Calu3 (cell line): ENCODE measurements at regions of chr3 and their contacts with region 1.

Region 1: DNA sequence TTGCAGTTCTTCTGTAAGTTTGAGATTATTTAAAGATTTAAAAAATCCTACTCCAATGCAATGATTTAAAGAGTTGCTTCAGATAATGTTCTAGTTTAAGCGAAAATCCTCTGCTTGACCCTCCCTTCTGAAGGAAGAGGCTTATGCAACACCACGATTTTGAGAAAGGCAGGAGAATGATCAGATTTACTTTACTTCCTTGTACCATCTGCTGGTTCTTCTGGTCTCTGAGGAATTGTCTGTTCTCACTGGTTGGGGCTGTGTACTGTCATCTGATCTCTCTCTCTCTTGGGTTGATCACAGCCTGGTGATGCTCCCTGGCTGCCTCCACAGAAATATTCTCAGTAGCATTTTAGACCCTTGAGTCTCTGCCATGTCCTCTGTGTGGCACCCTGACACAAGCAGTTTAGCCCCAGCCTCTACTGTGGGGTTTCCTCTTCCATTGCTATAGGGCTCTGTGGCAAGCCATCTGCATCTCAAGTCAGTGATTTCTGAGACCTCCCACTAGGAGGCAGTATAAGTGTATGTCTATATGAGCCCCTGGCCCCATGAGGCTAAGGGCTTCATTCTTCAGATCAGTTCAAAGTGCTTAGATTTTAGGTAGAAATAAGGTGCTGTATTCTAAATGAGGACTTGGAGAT is 50.8 kb upstream of the PLAAT1 start:
- DNase-seq: peak; percentile 76
- H3K4me3 Mint-ChIP-seq: no peak overlapping the region
- H3K27ac Mint-ChIP-seq: no peak overlapping the region
- H3K4me1 Mint-ChIP-seq: no peaks in the 10 kb centered on the region
- H3K27me3 Mint-ChIP-seq: no peaks in the 10 kb centered on the region
- CTCF ChIP-seq: peak; percentile 79

Region 2: DNA sequence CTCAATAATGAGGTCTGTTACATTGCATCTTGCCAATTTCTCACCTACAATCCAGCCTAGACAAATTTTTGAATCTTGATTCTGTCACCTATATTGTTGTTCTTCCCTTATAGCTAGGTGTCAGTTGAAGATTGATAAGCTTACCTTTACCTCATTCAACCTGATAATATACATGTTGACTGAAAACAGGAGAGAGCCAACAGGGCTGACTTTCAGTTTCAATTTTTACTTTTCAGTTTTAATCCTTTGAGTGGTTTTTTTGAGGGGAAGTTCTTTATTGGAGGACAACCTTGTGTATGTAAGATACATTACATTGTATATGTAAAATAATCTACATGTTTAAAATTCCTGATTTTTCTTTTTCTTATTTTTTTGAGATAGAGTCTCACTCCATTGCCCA is 182.5 kb after region 1 on chr3:
- CTCF ChIA-PET with region 1: no interaction called
- intact Hi-C with region 1: loop called (anchors 10 kb)
- DNase-seq: no peak
- H3K4me3 Mint-ChIP-seq: no peak overlapping the region
- H3K27ac Mint-ChIP-seq: no peak overlapping the region
- H3K4me1 Mint-ChIP-seq: no peaks in the 10 kb centered on the region
- H3K27me3 Mint-ChIP-seq: no peaks in the 10 kb centered on the region
- CTCF ChIP-seq: no peak

Region 3: DNA sequence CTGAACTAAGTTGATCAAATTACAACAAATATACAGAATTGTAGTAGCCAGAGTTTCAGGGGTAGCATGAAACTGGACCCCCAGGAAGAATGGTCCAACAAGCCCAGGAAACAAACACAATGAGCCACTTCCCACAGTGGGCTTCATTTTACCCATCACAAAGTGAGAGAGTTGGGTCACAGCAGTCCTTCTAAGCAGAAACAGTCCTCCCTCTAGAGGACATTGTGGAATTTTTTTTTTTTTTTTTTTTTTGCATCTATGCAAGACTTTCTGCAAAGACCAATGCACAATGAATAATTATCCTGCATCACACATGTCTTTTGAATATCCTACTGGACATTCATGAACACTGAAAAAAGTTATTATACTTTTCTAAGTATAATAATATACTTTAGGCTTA is 262.1 kb after region 1 on chr3:
- CTCF ChIA-PET with region 1: no interaction called
- intact Hi-C with region 1: loop called (anchors 1 kb)
- DNase-seq: no peak
- H3K4me3 Mint-ChIP-seq: no peak overlapping the region
- H3K27ac Mint-ChIP-seq: no peak overlapping the region
- H3K4me1 Mint-ChIP-seq: no peaks in the 10 kb centered on the region
- H3K27me3 Mint-ChIP-seq: no peaks in the 10 kb centered on the region
- CTCF ChIP-seq: peak; percentile 44

Region 4: GRCh38 chr3:193465992-193466608 is 275.8 kb after region 1 on chr3:
- CTCF ChIA-PET with region 1: no interaction called
- intact Hi-C with region 1: loop called (anchors 2 kb)
- DNase-seq: no peak
- H3K4me3 Mint-ChIP-seq: no peak overlapping the region
- H3K27ac Mint-ChIP-seq: no peak overlapping the region
- H3K4me1 Mint-ChIP-seq: peaks cover 9% of the 10 kb centered on the region
- H3K27me3 Mint-ChIP-seq: no peaks in the 10 kb centered on the region
- CTCF ChIP-seq: no peak

Region 5: GRCh38 chr3:193564012-193564411 is 373.7 kb after region 1 on chr3:
- CTCF ChIA-PET with region 1: no interaction called
- intact Hi-C with region 1: loop called (anchors 2 kb)
- DNase-seq: peak; percentile 84
- H3K4me3 Mint-ChIP-seq: no peak overlapping the region
- H3K27ac Mint-ChIP-seq: no peak overlapping the region
- H3K4me1 Mint-ChIP-seq: peaks cover 6% of the 10 kb centered on the region
- H3K27me3 Mint-ChIP-seq: no peaks in the 10 kb centered on the region
- CTCF ChIP-seq: peak; percentile 57

Region 6: DNA sequence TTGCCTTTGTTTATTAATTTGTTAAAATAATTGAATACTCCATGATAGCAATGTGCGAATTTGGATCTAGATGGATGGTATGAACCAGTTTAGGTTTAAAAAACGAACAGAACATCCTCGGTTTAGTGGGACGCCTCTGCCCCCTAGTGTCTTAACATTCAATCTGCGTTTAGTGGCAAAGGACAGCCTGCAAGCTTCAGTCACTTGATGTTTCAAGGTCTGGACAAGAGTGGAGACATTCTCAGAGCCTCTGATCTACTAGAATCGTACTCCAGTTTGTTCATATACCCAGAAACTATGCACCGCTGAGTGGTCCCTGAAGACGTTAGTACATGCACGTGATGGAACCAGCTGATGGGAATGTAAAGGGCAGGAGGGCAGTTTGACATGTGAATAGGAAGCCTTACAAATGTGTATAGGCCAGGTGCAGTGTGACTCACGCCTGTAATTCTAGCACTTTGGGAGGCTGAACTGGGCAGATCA is 382.2 kb after region 1 on chr3:
- CTCF ChIA-PET with region 1: interaction called, 3 read pairs
- intact Hi-C with region 1: loop called (anchors 1 kb)
- DNase-seq: peak; percentile 83
- H3K4me3 Mint-ChIP-seq: no peak overlapping the region
- H3K27ac Mint-ChIP-seq: no peak overlapping the region
- H3K4me1 Mint-ChIP-seq: peaks cover 13% of the 10 kb centered on the region
- H3K27me3 Mint-ChIP-seq: no peaks in the 10 kb centered on the region
- CTCF ChIP-seq: peak; percentile 82